ENCODE measurements at regions of chrX and their contacts with region 1.

Region 1: GRCh38 chrX:32530802-32531403 is 680.4 kb downstream of the DMD start:
- DNase-seq: no peak
- H3K4me3 ChIP-seq: peak overlapping the region in 1 of 4 donors; percentile 8
- H3K27ac ChIP-seq: no peak overlapping the region
- H3K4me1 ChIP-seq: no peaks in the 10 kb centered on the region
- H3K27me3 ChIP-seq: no peaks in the 10 kb centered on the region
- CTCF ChIP-seq: peak in 5 of 6 experiments; percentile 23 to 62 (median 42)
- POLR2A ChIP-seq: no peak

Region 2: DNA sequence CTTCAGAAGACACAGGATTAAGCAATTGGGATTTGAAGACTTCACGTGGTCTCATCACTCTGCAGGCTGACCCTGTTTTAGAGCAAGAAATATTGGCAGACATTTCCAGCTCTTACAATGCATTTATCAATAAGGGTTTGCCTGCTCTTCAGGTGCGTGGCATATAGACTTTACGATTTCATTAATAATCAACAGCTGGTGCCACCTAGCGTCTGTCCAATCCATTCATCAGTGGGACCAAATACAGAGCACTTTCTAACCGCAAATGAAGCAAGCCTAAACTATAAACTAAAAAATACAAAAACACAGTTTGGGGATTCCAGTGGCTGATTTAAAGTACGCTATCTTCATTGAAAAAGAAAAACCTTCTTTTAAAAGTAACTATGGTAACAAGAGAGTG is 805.9 kb after region 1 on chrX:
- intact Hi-C with region 1: loop called (anchors 10 kb)
- DNase-seq: no peak
- H3K4me3 ChIP-seq: no peak overlapping the region
- H3K27ac ChIP-seq: no peak overlapping the region
- H3K4me1 ChIP-seq: no peaks in the 10 kb centered on the region
- H3K27me3 ChIP-seq: no peaks in the 10 kb centered on the region
- CTCF ChIP-seq: peak in 4 of 6 experiments; percentile 26 to 42 (median 37)
- POLR2A ChIP-seq: no peak

Measured in esophagus squamous epithelium (tissue), 5 donors.